Activated CD4-positive, alpha-beta memory T cell treated with anti-CD3 and anti-CD28 coated beads for 36 hours (primary cell): ENCODE measurements at regions of chr20 and their contacts with region 1.

Region 1: DNA sequence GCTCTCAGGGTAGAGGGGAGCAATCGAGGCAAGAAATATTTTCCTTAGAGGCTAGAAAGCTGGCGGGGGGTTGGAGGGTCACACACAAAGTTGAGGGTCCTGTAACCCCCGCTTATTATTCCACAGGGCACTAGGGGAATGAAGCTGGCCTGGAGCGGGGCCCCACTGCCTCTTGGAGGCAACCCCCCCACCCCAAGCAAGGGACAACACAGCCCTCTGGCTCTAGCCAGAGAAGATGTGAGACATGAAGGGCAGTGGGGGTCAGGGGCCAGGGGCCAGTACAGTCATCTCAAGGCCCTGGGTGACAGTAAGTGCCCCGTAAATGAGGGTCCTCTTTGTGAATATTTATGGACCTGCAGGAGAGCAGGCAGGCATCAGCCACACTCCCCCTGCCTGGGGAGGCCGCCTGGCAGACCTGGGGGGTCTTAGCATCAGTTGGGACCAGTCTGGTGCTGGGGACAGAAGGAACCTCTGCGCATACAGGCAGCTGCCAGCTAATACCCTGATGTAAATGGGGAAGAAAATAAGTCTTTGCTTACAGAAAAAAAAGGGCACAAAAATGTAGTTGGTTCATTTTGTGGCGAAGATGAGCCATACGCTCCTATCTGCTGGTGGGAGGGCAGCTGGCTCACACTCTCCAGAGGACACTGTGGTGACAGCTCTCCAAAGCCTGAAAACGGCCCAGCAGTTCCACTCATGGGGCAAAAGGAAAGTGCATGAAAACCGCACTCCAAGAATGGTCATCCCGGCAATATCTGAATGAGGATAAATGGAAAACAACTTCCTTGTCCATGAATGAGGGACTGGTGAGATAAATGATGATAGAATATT is 21.9 kb downstream of the SPATA2 start:
- DNase-seq: peak; percentile 81
- H3K4me3 Mint-ChIP-seq: peak overlapping the region; percentile 6
- H3K27ac Mint-ChIP-seq: peak overlapping the region; percentile 87
- H3K4me1 Mint-ChIP-seq: peaks cover 32% of the 10 kb centered on the region
- H3K27me3 Mint-ChIP-seq: no peaks in the 10 kb centered on the region

Region 2: GRCh38 chr20:49832632-49833327 is 60.7 kb before region 1 on chr20:
- CTCF ChIA-PET with region 1: no interaction called
- POLR2A ChIA-PET with region 1: no interaction called
- intact Hi-C with region 1: no loop called
- DNase-seq: no peak
- H3K4me3 Mint-ChIP-seq: no peak overlapping the region
- H3K27ac Mint-ChIP-seq: no peak overlapping the region
- H3K4me1 Mint-ChIP-seq: no peaks in the 10 kb centered on the region
- H3K27me3 Mint-ChIP-seq: no peaks in the 10 kb centered on the region

Region 3: GRCh38 chr20:49915378-49916145 is 22.1 kb after region 1 on chr20 and contains the start of gene SPATA2:
- CTCF ChIA-PET with region 1: interaction called, 13 read pairs
- POLR2A ChIA-PET with region 1: interaction called, 7 read pairs
- intact Hi-C with region 1: loop called (anchors 2 kb)
- DNase-seq: peak; percentile 94
- H3K4me3 Mint-ChIP-seq: peak within 1 kb of the TSS; percentile 98
- H3K27ac Mint-ChIP-seq: peak within 1 kb of the TSS; percentile 98
- H3K4me1 Mint-ChIP-seq: peaks cover 31% of the 10 kb centered on the region
- H3K27me3 Mint-ChIP-seq: no peaks in the 10 kb centered on the region
- total RNA-seq, gene SPATA2: 7.9 to 8.6 TPM